ENCODE measurements at regions of chr3 and their contacts with region 1.

Region 1: GRCh38 chr3:52220380-52221026 is 4.9 kb downstream of the TLR9 start:
- DNase-seq: peak; percentile 62 to 92 (median 85)
- ATAC-seq: peak; percentile 45 to 69 (median 57)
- H3K4me3 ChIP-seq: no peak overlapping the region
- H3K4me3 Mint-ChIP-seq: peak overlapping the region; percentile 21 to 83 (median 32)
- H3K27ac ChIP-seq: peak overlapping the region; percentile 6
- H3K27ac Mint-ChIP-seq: peak overlapping the region; percentile 61 to 85
- H3K4me1 ChIP-seq: peaks cover 50 to 99% of the 10 kb centered on the region in 2 experiments
- H3K4me1 Mint-ChIP-seq: peaks cover 89 to 96% (median 93%) of the 10 kb centered on the region in 3 donors
- H3K27me3 ChIP-seq: no peaks in the 10 kb centered on the region
- H3K27me3 Mint-ChIP-seq: no peaks in the 10 kb centered on the region

Region 2: GRCh38 chr3:52208556-52208955 is 11.9 kb before region 1 on chr3:
- CTCF ChIA-PET with region 1: interaction called, 4 to 11 read pairs
- POLR2A ChIA-PET with region 1: no interaction called
- DNase-seq: no peak
- ATAC-seq: no peak
- H3K4me3 ChIP-seq: no peak overlapping the region
- H3K4me3 Mint-ChIP-seq: no peak overlapping the region
- H3K27ac ChIP-seq: no peak overlapping the region
- H3K27ac Mint-ChIP-seq: no peak overlapping the region
- H3K4me1 ChIP-seq: no peaks in the 10 kb centered on the region
- H3K4me1 Mint-ChIP-seq: peaks cover 0 to 5% (median under 1%) of the 10 kb centered on the region in 3 donors
- H3K27me3 ChIP-seq: no peaks in the 10 kb centered on the region
- H3K27me3 Mint-ChIP-seq: no peaks in the 10 kb centered on the region

Region 3: GRCh38 chr3:52259035-52259434 is 38.5 kb after region 1 on chr3:
- CTCF ChIA-PET with region 1: interaction called, 3 to 12 read pairs
- POLR2A ChIA-PET with region 1: no interaction called
- DNase-seq: no peak
- ATAC-seq: no peak
- H3K4me3 ChIP-seq: no peak overlapping the region
- H3K4me3 Mint-ChIP-seq: no peak overlapping the region
- H3K27ac ChIP-seq: peak overlapping the region; percentile 35
- H3K27ac Mint-ChIP-seq: peak overlapping the region; percentile 97 to 99
- H3K4me1 ChIP-seq: peaks cover 65 to 74% of the 10 kb centered on the region in 2 experiments
- H3K4me1 Mint-ChIP-seq: peaks cover 93 to 95% (median 94%) of the 10 kb centered on the region in 3 donors
- H3K27me3 ChIP-seq: no peaks in the 10 kb centered on the region
- H3K27me3 Mint-ChIP-seq: no peaks in the 10 kb centered on the region

Region 4: DNA sequence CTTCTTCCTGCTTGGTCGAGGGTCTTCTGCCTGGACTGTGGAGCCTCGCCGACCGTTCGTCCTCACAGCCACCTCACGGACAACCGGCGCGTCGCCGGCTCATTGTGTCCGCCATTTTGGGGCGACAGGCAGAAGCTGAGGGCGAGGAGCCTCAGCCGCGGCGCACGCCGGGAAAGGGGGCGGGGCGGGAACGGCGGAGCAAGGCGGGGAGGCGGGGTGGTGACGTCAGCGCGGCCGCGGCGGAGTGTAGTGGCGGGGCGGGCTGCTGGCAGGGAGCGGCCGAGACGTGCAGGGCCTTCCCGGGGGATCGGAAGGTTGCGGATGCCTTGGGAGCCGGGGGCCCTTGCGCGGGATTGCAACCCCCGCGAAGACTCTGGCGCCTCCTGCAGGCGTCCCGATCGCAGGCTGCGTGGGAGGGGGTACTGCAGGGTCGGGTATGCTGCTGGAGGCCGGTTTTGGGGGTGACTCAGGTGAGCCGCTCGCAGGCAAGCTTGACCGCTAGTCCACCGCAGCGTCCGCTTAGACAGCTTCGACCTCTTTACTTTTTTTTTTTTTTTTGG is 58.1 kb after region 1 on chr3 and contains the start of gene WDR82:
- CTCF ChIA-PET with region 1: interaction called in 1 of 2 experiments, 17 read pairs
- POLR2A ChIA-PET with region 1: no interaction called
- DNase-seq: peak; percentile 91 to 99 (median 96)
- ATAC-seq: peak; percentile 81 to 87 (median 84)
- H3K4me3 ChIP-seq: peak within 1 kb of the TSS; percentile 69 to 86
- H3K4me3 Mint-ChIP-seq: peak within 1 kb of the TSS; percentile 89 to 92 (median 91)
- H3K27ac ChIP-seq: peak within 1 kb of the TSS; percentile 93
- H3K27ac Mint-ChIP-seq: peak within 1 kb of the TSS; percentile 95 to 98
- H3K4me1 ChIP-seq: peaks cover 48 to 62% of the 10 kb centered on the region in 2 experiments
- H3K4me1 Mint-ChIP-seq: peaks cover 60 to 81% (median 74%) of the 10 kb centered on the region in 3 donors
- H3K27me3 ChIP-seq: no peaks in the 10 kb centered on the region
- H3K27me3 Mint-ChIP-seq: no peaks in the 10 kb centered on the region
- total RNA-seq, gene WDR82: 119 to 159 (median 154) TPM

Region 5: GRCh38 chr3:52339612-52340011 is 119.1 kb after region 1 on chr3:
- CTCF ChIA-PET with region 1: interaction called, 23 to 48 read pairs
- POLR2A ChIA-PET with region 1: no interaction called
- DNase-seq: peak in 29 of 35 experiments; percentile 13 to 86 (median 38)
- ATAC-seq: peak; percentile 62 to 73 (median 68)
- H3K4me3 ChIP-seq: no peak overlapping the region
- H3K4me3 Mint-ChIP-seq: no peak overlapping the region
- H3K27ac ChIP-seq: no peak overlapping the region
- H3K27ac Mint-ChIP-seq: peak overlapping the region; percentile 17 to 55
- H3K4me1 ChIP-seq: no peaks in the 10 kb centered on the region
- H3K4me1 Mint-ChIP-seq: peaks cover 8 to 29% (median 8%) of the 10 kb centered on the region in 3 donors
- H3K27me3 ChIP-seq: no peaks in the 10 kb centered on the region
- H3K27me3 Mint-ChIP-seq: no peaks in the 10 kb centered on the region

Measured in T-cell (primary cell).